ENCODE measurements at regions of chr11 and their contacts with region 1.

Region 1: DNA sequence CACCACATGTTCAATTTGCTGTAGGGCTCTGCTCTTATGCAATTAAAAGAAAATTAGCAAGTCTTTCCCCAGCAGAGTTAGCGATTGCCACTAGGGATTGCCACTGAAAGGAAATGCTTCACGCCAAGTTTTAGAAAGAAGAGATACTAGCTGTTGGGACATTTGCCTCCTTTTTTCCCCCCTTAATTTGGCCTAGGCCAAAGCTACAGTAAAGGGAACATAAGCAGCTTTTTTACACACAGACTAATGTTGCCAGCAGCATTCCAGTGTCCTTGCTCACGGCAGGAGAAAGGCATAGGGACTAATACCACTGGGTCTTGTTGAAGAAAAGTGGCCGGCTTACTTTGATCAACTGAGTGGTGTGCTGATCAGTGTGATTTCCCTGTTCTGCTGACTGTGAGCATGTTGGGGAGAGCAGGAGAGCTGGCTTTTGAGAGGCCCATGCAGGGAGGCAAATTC is 71.2 kb downstream of the PHF21A start:
- DNase-seq: no peak
- H3K4me3 ChIP-seq: no peak overlapping the region
- H3K27ac ChIP-seq: peak overlapping the region in 3 of 4 donors; percentile 16 to 52 (median 26)
- H3K4me1 ChIP-seq: peaks cover 22 to 42% (median 36%) of the 10 kb centered on the region in 4 donors
- H3K27me3 ChIP-seq: no peaks in the 10 kb centered on the region
- CTCF ChIP-seq: no peak
- EP300 ChIP-seq: no peak
- POLR2A ChIP-seq: no peak

Region 2: DNA sequence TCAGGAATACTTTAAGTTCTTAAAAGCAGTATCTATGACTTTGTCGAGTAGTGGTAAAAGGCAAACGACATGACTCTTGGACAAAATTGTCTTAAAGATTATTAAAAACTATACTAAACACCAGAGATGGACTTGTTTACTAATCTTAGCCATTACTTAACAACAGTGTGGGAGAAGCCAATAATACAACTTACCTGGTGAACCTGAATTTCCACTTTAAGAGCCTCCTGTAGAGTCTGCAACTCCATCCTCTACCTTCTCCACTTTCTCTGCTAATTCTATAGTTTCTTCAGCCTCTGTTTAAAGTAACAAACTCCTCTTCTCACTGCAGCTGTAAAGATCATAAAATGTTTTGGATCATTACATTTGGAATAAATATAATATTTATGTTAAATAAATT is 33.9 kb after region 1 on chr11:
- intact Hi-C with region 1: no loop called
- DNase-seq: no peak
- H3K4me3 ChIP-seq: no peak overlapping the region
- H3K27ac ChIP-seq: no peak overlapping the region
- H3K4me1 ChIP-seq: no peaks in the 10 kb centered on the region
- H3K27me3 ChIP-seq: no peaks in the 10 kb centered on the region
- CTCF ChIP-seq: no peak
- EP300 ChIP-seq: no peak
- POLR2A ChIP-seq: no peak

Region 3: DNA sequence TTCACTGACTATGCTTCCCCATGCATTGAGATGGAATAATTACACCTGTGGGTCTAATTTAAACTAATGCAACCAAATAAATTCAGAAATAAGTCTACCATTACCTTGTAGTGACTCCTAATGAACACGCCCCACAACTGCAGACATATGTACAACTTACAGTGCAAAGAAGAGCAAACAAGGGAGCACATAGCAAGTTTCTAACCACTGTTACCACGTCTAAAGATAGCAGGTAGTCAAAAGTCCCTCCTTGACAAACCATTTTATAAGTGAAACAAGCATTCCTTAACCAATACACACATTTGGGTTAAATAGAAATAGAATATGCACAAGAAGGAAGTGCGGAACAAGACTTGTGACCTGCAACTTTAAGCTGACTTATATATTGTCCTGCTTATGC is 50.6 kb after region 1 on chr11:
- intact Hi-C with region 1: loop called (anchors 10 kb)
- DNase-seq: no peak
- H3K4me3 ChIP-seq: no peak overlapping the region
- H3K27ac ChIP-seq: no peak overlapping the region
- H3K4me1 ChIP-seq: peaks cover 27 to 66% (median 46%) of the 10 kb centered on the region in 4 donors
- H3K27me3 ChIP-seq: no peaks in the 10 kb centered on the region
- CTCF ChIP-seq: no peak
- EP300 ChIP-seq: no peak
- POLR2A ChIP-seq: no peak

Measured in esophagus muscularis mucosa (tissue), 4 donors.